ENCODE measurements at regions of chrX and their contacts with region 1.

Region 1: DNA sequence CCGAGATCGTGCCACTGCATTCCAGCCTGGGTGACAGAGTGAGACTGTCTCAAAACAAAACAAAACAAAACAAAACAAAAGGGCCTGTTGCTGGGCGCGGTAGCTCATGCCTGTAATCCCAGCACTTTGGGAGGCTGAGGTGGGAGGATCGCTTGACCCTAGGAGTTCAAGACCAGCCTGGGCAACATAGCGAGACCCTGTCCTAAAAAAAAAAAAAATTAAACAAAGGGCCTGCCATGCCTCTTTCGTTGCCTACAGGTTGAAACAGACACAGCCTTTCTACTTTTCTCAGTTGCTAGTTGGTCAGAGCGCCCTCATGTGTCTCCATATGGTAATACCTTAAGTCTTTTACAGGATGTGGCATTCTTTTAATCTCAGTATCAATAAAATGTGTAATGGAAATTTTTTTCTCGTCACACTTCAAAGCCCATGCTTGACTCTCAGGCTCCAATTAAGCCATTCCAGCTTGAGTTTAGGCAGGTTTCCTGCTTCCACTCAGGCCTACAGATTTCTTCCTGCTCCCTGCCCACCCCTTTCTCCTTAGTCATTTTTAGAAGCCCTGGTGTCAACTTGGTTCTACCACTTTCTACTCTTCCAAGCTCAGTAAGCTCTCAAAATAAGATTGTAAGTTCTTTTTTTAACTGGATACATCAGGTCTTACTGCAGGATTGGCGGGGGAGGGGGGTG is 4.7 kb upstream of the SOWAHD start:
- DNase-seq: peak in 1 of 2 experiments; percentile 19
- H3K4me3 ChIP-seq: no peak overlapping the region
- H3K4me3 Mint-ChIP-seq: no peak overlapping the region
- H3K27ac Mint-ChIP-seq: no peak overlapping the region
- H3K4me1 ChIP-seq: no peaks in the 10 kb centered on the region
- H3K4me1 Mint-ChIP-seq: peaks cover 13% of the 10 kb centered on the region
- H3K27me3 ChIP-seq: no peaks in the 10 kb centered on the region
- H3K27me3 Mint-ChIP-seq: no peaks in the 10 kb centered on the region
- CTCF ChIP-seq: peak in 1 of 2 experiments; percentile 3

Region 2: GRCh38 chrX:119583431-119584059 is 170.2 kb before region 1 on chrX:
- CTCF ChIA-PET with region 1: no interaction called
- POLR2A ChIA-PET with region 1: interaction called, 20 read pairs
- intact Hi-C with region 1: no loop called
- DNase-seq: no peak
- H3K4me3 ChIP-seq: no peak overlapping the region
- H3K4me3 Mint-ChIP-seq: no peak overlapping the region
- H3K27ac Mint-ChIP-seq: no peak overlapping the region
- H3K4me1 ChIP-seq: no peaks in the 10 kb centered on the region
- H3K4me1 Mint-ChIP-seq: no peaks in the 10 kb centered on the region
- H3K27me3 ChIP-seq: no peaks in the 10 kb centered on the region
- H3K27me3 Mint-ChIP-seq: no peaks in the 10 kb centered on the region
- CTCF ChIP-seq: no peak

Region 3: GRCh38 chrX:120200851-120201250 is 447.1 kb after region 1 on chrX:
- CTCF ChIA-PET with region 1: no interaction called
- POLR2A ChIA-PET with region 1: no interaction called
- intact Hi-C with region 1: no loop called
- DNase-seq: no peak
- H3K4me3 ChIP-seq: no peak overlapping the region
- H3K4me3 Mint-ChIP-seq: no peak overlapping the region
- H3K27ac Mint-ChIP-seq: no peak overlapping the region
- H3K4me1 ChIP-seq: no peaks in the 10 kb centered on the region
- H3K4me1 Mint-ChIP-seq: no peaks in the 10 kb centered on the region
- H3K27me3 ChIP-seq: no peaks in the 10 kb centered on the region
- H3K27me3 Mint-ChIP-seq: no peaks in the 10 kb centered on the region
- CTCF ChIP-seq: no peak